A673 (cell line): ENCODE measurements at regions of chr1 and their contacts with region 1.

Region 1: DNA sequence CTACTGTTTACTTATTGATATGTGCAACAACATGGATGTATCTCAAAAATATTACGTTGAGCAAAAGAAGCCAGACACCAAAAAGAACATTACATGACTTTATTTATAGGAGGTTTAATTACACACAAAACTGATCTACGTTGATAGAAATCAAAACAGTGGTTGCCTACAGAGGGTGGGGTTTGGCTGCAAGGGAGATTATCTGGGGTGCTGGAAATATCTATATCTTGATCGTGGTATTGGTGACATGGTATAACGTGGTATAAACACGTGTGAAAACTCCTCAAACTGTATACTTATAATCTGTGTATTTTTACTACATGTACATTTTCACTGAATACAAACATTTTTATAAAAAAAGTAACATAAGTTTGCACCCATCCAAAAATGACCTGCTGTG is 38.9 kb downstream of the S1PR1 start:
- DNase-seq: no peak
- H3K4me3 ChIP-seq: no peak overlapping the region
- H3K27ac ChIP-seq: no peak overlapping the region
- H3K4me1 ChIP-seq: no peaks in the 10 kb centered on the region
- H3K27me3 ChIP-seq: no peaks in the 10 kb centered on the region
- CTCF ChIP-seq: no peak

Region 2: DNA sequence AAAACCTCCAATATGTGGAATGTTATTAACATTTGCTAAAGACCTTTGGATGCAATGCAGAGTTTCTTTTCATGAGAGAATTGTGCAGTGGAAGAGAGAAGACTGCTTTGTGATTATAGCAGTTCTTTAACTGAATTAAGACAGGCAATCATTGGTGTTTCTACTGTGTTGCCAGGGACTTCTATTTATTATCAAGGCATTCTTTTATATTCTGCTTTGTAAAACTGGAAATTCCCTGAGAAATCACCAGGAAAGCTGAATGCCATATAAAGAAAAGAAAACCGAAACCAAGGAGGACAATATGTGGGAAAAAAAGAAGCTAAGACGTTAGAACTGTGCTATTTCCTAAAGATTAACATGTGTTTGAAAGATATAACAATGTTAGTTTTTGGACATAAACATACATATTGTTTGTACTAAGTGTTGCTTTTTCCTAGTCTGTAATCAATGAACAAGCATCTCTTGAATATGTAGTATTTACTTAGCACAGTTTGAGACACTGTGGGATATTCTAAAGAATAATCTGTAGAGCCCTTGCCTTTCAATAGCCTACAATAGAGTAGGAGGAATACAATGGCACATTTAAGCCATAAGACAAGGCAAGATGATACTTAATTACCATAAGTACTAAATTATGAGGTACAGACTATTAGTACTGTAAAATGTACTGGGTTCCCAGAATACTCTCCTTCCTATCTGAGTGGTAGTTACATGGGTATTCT is 428.1 kb before region 1 on chr1:
- CTCF ChIA-PET with region 1: no interaction called
- POLR2A ChIA-PET with region 1: interaction called, 20 read pairs
- intact Hi-C with region 1: no loop called
- DNase-seq: no peak
- H3K4me3 ChIP-seq: no peak overlapping the region
- H3K27ac ChIP-seq: no peak overlapping the region
- H3K4me1 ChIP-seq: no peaks in the 10 kb centered on the region
- H3K27me3 ChIP-seq: no peaks in the 10 kb centered on the region
- CTCF ChIP-seq: no peak

Region 3: GRCh38 chr1:101207891-101208290 is 67.8 kb before region 1 on chr1:
- CTCF ChIA-PET with region 1: no interaction called
- POLR2A ChIA-PET with region 1: no interaction called
- intact Hi-C with region 1: no loop called
- DNase-seq: no peak
- H3K4me3 ChIP-seq: no peak overlapping the region
- H3K27ac ChIP-seq: no peak overlapping the region
- H3K4me1 ChIP-seq: no peaks in the 10 kb centered on the region
- H3K27me3 ChIP-seq: no peaks in the 10 kb centered on the region
- CTCF ChIP-seq: no peak